PC-9 (cell line): ENCODE measurements at regions of chr11 and their contacts with region 1.

Region 1: GRCh38 chr11:47667135-47667534 is 24.8 kb upstream of the MTCH2 start:
- DNase-seq: no peak
- H3K4me3 ChIP-seq: no peak overlapping the region
- H3K27ac ChIP-seq: no peak overlapping the region
- H3K4me1 ChIP-seq: peaks cover 42% of the 10 kb centered on the region
- H3K27me3 ChIP-seq: no peaks in the 10 kb centered on the region
- CTCF ChIP-seq: no peak

Region 2: GRCh38 chr11:47631473-47631872 is 35.7 kb before region 1 on chr11:
- CTCF ChIA-PET with region 1: no interaction called
- POLR2A ChIA-PET with region 1: no interaction called
- intact Hi-C with region 1: no loop called
- DNase-seq: no peak
- H3K4me3 ChIP-seq: no peak overlapping the region
- H3K27ac ChIP-seq: no peak overlapping the region
- H3K4me1 ChIP-seq: no peaks in the 10 kb centered on the region
- H3K27me3 ChIP-seq: no peaks in the 10 kb centered on the region
- CTCF ChIP-seq: no peak

Region 3: GRCh38 chr11:47656260-47656885 is 10.8 kb before region 1 on chr11:
- CTCF ChIA-PET with region 1: no interaction called
- POLR2A ChIA-PET with region 1: interaction called, 12 read pairs
- intact Hi-C with region 1: no loop called
- DNase-seq: no peak
- H3K4me3 ChIP-seq: no peak overlapping the region
- H3K27ac ChIP-seq: no peak overlapping the region
- H3K4me1 ChIP-seq: no peaks in the 10 kb centered on the region
- H3K27me3 ChIP-seq: no peaks in the 10 kb centered on the region
- CTCF ChIP-seq: no peak